AG04450 (cell line): ENCODE measurements at regions of chr13 and their contacts with region 1.

Region 1: GRCh38 chr13:30739761-30740642 is 4.7 kb downstream of the ALOX5AP start:
- DNase-seq: peak; percentile 86
- H3K4me3 ChIP-seq: peak overlapping the region; percentile 38
- H3K27ac ChIP-seq: peak overlapping the region; percentile 91
- H3K27me3 ChIP-seq: peaks cover 3% of the 10 kb centered on the region
- CTCF ChIP-seq: no peak

Region 2: GRCh38 chr13:30690282-30691188 is 49.5 kb before region 1 on chr13:
- CTCF ChIA-PET with region 1: no interaction called
- POLR2A ChIA-PET with region 1: interaction called, 12 read pairs
- DNase-seq: peak; percentile 99
- H3K4me3 ChIP-seq: peak overlapping the region; percentile 64
- H3K27ac ChIP-seq: peak overlapping the region; percentile 96
- H3K27me3 ChIP-seq: no peaks in the 10 kb centered on the region
- CTCF ChIP-seq: no peak